ENCODE measurements at regions of chr3 and their contacts with region 1.

Region 1: DNA sequence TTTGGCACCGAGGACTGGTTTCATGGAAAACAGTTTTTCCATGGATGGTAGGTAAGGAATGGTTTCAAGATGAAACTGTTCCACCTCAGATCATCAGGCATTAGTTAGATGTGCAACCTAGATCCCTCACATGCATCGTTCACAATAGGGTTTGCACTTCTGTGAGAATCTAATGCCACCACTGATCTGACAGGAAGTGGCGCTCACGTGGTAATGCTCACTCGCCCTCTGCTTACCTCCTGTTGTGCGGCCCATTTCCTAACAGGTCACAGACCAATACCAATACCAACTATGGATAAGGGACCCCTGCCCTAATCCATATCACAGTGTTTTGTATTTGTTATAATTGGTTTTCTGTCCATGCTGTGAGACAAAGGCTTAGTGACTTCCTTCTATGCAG is 58.9 kb downstream of the SLMAP start:
- DNase-seq: peak in 6 of 9 donors; percentile 20 to 38 (median 34)
- ATAC-seq: peak; percentile 86
- H3K4me3 ChIP-seq: peak overlapping the region; percentile 5
- H3K4me3 Mint-ChIP-seq: peak overlapping the region; percentile 22 to 82 (median 64)
- H3K27ac ChIP-seq: no peak overlapping the region
- H3K27ac Mint-ChIP-seq: peak overlapping the region in 8 of 9 donors; percentile 25 to 91 (median 75)
- H3K4me1 ChIP-seq: peaks cover 6 to 21% of the 10 kb centered on the region in 2 donors
- H3K4me1 Mint-ChIP-seq: peaks cover 21 to 66% (median 52%) of the 10 kb centered on the region in 7 donors
- H3K27me3 ChIP-seq: no peaks in the 10 kb centered on the region
- H3K27me3 Mint-ChIP-seq: no peaks in the 10 kb centered on the region

Region 2: GRCh38 chr3:57803647-57804081 is 11.4 kb before region 1 on chr3:
- CTCF ChIA-PET with region 1: no interaction called
- POLR2A ChIA-PET with region 1: interaction called, 3 read pairs
- intact Hi-C with region 1: loop called in 1 of 2 experiments (anchors 2 kb)
- DNase-seq: peak in 5 of 9 donors; percentile 13 to 35 (median 28)
- ATAC-seq: peak; percentile 71
- H3K4me3 ChIP-seq: peak overlapping the region; percentile 19
- H3K4me3 Mint-ChIP-seq: peak overlapping the region; percentile 13 to 88 (median 79)
- H3K27ac ChIP-seq: peak overlapping the region; percentile 12
- H3K27ac Mint-ChIP-seq: peak overlapping the region; percentile 34 to 94 (median 89)
- H3K4me1 ChIP-seq: peaks cover 8 to 20% of the 10 kb centered on the region in 2 donors
- H3K4me1 Mint-ChIP-seq: peaks cover 45 to 90% (median 77%) of the 10 kb centered on the region in 7 donors
- H3K27me3 ChIP-seq: no peaks in the 10 kb centered on the region
- H3K27me3 Mint-ChIP-seq: no peaks in the 10 kb centered on the region

Region 3: GRCh38 chr3:57826245-57826951 is 11.4 kb after region 1 on chr3:
- CTCF ChIA-PET with region 1: no interaction called
- POLR2A ChIA-PET with region 1: interaction called, 3 read pairs
- intact Hi-C with region 1: loop called in 1 of 2 experiments (anchors 2 kb)
- DNase-seq: peak in 1 of 9 donors; percentile 22
- ATAC-seq: no peak
- H3K4me3 ChIP-seq: no peak overlapping the region
- H3K4me3 Mint-ChIP-seq: peak overlapping the region in 1 of 10 donors; percentile 22
- H3K27ac ChIP-seq: no peak overlapping the region
- H3K27ac Mint-ChIP-seq: peak overlapping the region in 5 of 9 donors; percentile 14 to 62 (median 51)
- H3K4me1 ChIP-seq: peaks cover 0 to 4% of the 10 kb centered on the region in 2 donors
- H3K4me1 Mint-ChIP-seq: peaks cover 6 to 43% (median 37%) of the 10 kb centered on the region in 7 donors
- H3K27me3 ChIP-seq: no peaks in the 10 kb centered on the region
- H3K27me3 Mint-ChIP-seq: no peaks in the 10 kb centered on the region

Measured in naive thymus-derived CD4-positive, alpha-beta T cell (primary cell).